ENCODE measurements at regions of chr12 and their contacts with region 1.

Region 1: DNA sequence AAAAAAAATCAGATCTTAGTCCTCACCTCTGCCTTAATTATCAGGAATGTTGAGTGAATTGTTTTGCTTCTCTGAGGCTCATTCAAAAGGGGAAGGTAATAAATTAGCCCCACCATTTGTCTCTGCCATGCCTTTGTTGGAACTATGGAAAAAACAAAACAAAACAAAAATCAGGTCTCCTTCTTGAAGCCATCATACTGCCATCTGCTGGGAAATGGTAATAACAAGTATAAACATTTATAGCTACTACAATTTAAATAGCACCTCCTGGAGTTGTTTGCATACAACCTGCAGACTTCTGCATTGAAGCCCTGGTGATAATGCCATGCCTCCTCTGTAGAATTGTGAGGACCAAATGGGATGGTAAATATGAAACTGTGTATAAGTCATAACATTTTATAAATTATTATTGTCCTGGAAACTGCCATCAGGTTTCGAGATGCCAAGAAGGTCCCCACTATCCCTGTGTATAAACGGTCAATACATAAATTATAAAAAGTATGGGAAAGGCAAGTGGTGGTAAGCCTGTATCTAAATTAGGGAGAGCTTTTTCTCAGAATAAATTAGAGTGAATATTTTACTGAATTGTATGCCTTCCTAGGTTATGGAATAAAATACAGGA is 87.2 kb upstream of the FGD4 start:
- H3K4me3 Mint-ChIP-seq: no peak overlapping the region
- H3K27ac Mint-ChIP-seq: peak overlapping the region; percentile 22
- H3K4me1 Mint-ChIP-seq: no peaks in the 10 kb centered on the region
- H3K27me3 Mint-ChIP-seq: no peaks in the 10 kb centered on the region

Region 2: GRCh38 chr12:32062881-32063280 is 249.3 kb before region 1 on chr12:
- intact Hi-C with region 1: loop called (anchors 2 kb)
- H3K4me3 Mint-ChIP-seq: no peak overlapping the region
- H3K27ac Mint-ChIP-seq: no peak overlapping the region
- H3K4me1 Mint-ChIP-seq: peaks cover 11% of the 10 kb centered on the region
- H3K27me3 Mint-ChIP-seq: peaks cover 2% of the 10 kb centered on the region

Region 3: DNA sequence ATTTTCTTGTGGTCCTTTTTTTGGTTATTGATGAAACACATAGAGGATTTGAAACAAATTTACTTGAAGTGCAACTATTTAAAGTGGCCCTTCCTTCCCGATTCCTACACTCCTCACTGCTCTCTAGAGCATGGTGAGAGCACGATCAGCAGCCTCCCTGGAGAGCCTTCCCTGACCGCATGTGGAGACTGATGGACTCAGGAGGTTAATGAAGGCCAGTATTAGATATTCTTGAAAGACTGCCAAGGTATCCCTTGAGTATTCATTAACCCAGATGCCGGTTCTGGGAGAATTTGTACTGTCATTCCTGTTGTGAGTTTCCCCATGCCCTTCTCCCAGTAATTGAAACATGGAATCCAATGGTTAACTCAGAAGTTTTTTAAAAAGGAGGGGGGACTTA is 15.6 kb before region 1 on chr12:
- intact Hi-C with region 1: no loop called
- H3K4me3 Mint-ChIP-seq: no peak overlapping the region
- H3K27ac Mint-ChIP-seq: no peak overlapping the region
- H3K4me1 Mint-ChIP-seq: peaks cover 7% of the 10 kb centered on the region
- H3K27me3 Mint-ChIP-seq: no peaks in the 10 kb centered on the region

Region 4: GRCh38 chr12:32322354-32322753 is 10.2 kb after region 1 on chr12:
- intact Hi-C with region 1: no loop called
- H3K4me3 Mint-ChIP-seq: no peak overlapping the region
- H3K27ac Mint-ChIP-seq: no peak overlapping the region
- H3K4me1 Mint-ChIP-seq: no peaks in the 10 kb centered on the region
- H3K27me3 Mint-ChIP-seq: no peaks in the 10 kb centered on the region